GM12878 (cell line): ENCODE measurements at regions of chrX and their contacts with region 1.

Region 1: DNA sequence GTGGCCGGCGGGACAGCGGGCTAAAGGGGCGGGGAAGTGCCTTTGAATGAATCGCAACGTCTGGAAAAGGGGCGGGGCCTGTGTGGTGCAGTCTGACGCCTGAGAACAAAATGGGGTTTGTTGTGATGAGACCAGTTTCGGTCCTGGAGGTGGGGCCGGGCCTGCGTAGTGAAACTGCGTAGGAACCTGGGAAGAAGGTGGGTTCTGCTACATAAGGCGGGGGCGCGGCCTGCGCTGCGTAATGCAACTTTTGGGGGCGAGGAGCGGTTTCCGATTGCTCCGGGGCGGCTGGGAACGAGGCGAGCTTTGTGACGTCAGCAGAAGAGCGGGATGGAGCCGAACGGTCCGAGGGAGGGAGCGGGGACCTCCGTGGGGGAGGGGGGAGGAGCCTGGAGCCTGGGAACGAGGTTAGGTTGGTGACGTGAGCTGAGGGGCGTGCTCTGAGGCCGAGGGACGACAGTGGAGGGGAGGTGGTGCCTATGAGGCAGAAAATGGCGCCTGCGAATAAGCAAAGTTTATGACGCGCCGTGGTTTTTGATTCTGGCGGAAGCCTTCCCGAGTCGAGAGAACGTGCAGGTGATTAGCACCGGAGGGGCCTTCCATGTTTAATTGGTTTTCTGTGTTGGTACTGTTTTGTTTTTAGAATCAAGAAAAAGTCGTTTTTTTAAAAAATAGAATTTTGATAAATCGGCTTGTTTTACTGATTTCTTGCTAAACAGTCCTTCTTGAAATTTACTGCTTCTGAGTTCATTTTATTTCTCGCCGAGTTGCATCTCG is 716 bp downstream of the USP11 start:
- DNase-seq: peak; percentile 87
- ATAC-seq: peak; percentile 88
- H3K4me3 ChIP-seq: peak overlapping the region; percentile 68; the same call in 1 of the 2 replicates
- H3K27ac ChIP-seq: peak overlapping the region; percentile 79
- H3K4me1 ChIP-seq: no peaks in the 10 kb centered on the region
- H3K27me3 ChIP-seq: no peaks in the 10 kb centered on the region
- CTCF ChIP-seq: no peak
- EP300 ChIP-seq: peak in 1 of 2 experiments; percentile 47; a peak in 1 of 4 replicates
- POLR2A ChIP-seq: 0 out of 2 replicates have a peak, but pooled peaks have one; percentile 6
- RAD21 ChIP-seq: no peak

Region 2: DNA sequence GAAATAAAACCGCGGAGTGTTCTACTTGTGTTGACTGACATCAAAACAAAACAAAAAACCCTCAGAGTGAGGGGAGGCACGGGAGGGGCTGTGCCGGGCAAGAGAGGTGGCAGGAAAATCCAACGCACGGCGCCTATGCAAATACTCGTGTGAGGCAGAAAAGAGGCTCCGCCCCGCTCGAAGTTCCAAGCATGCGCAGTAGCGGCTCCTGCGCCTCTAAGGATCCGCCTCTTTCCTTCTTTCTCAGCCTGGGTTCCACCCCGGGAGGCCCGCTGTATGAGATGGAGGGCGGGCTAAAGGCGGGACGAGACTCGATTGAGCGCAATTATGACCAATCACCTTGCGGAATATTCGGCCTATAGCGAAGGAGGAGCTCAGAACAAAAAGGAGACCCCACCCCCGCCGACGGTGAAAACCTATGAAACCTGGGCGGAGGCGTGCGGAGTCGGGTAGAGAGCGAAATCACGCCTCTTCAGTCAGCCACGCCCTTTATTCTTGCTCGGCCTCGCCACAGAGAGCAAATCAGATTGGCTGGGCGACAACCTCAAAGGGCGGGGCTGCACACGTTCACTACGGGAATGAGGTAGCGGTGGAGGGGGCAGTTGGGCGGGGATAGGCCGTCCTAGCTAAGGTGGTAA is 15.8 kb before region 1 on chrX:
- CTCF ChIA-PET with region 1: interaction called, 4 read pairs
- POLR2A ChIA-PET with region 1: interaction called, 29 read pairs
- RAD21 ChIA-PET with region 1: interaction called, 9 read pairs
- SMC1A ChIA-PET with region 1: interaction called, 6 read pairs
- in situ Hi-C with region 1: no loop called
- intact Hi-C with region 1: no loop called
- DNase-seq: peak; percentile 99
- ATAC-seq: peak; percentile 90
- H3K4me3 ChIP-seq: peak overlapping the region; percentile 88; the same call in 1 of the 2 replicates
- H3K27ac ChIP-seq: peak overlapping the region; percentile 96
- H3K4me1 ChIP-seq: peaks cover 8% of the 10 kb centered on the region; the same call in 1 of the 2 replicates
- H3K27me3 ChIP-seq: no peaks in the 10 kb centered on the region
- CTCF ChIP-seq: no peak
- EP300 ChIP-seq: no peak
- POLR2A ChIP-seq: no peak; the same call in 1 of the 2 replicates
- RAD21 ChIP-seq: no peak

Region 3: DNA sequence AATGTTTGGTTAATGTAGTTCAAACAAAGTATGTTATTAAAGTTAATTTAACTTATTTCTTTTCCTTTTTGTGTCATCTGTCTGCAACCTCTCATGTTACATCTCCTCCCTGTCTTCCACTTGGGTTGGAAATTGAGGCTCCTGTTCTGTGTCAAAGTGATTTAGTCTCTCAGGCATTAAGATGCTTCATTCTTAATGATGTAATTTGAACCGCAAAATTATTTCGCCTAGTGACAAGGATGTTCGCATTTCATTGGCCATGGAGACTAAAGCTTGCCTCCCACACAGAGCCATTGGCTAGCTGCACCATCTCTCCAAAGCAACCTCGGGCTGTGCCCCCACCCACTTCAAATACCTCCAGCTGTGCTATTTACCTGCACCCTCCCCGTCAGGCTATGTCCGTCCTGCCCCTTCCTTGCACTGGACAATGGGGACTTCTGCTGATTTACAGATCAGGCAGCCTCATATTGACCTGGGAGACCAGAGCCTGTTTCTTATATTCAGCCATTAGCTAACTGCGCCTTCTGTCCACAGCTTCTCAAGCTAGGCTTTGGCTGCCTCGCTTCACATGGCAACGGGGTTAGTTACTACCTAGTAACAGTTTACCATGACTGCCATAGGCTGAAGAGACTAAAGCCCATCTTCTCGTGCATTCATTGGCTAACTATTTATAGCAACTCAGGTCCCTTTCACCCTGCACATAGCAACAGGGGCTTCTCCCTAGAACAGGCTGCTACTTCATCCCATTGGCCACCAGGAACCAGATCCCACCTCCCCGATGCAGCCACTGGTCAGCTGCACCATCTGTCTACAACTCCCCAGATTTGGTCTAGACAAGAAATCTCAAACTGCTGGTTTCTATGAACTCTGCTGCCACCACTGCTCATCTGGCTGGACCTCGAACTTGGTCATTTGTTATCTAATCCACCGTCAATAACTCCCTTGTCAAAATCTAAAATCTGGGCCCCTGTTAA is 128.3 kb after region 1 on chrX:
- CTCF ChIA-PET with region 1: interaction called, 5 read pairs
- POLR2A ChIA-PET with region 1: interaction called, 6 read pairs
- RAD21 ChIA-PET with region 1: interaction called, 4 read pairs
- SMC1A ChIA-PET with region 1: no interaction called
- in situ Hi-C with region 1: no loop called
- intact Hi-C with region 1: loop called (anchors 5 kb)
- DNase-seq: peak; percentile 96
- ATAC-seq: peak; percentile 89
- H3K4me3 ChIP-seq: peak overlapping the region; percentile 69
- H3K27ac ChIP-seq: peak overlapping the region; percentile 45
- H3K4me1 ChIP-seq: no peaks in the 10 kb centered on the region
- H3K27me3 ChIP-seq: no peaks in the 10 kb centered on the region
- CTCF ChIP-seq: peak; percentile 9 to 43 (median 29); a peak in 3 of 6 replicates
- EP300 ChIP-seq: no peak
- POLR2A ChIP-seq: no peak
- RAD21 ChIP-seq: peak; percentile 42; the same call in 1 of the 2 replicates

Region 4: DNA sequence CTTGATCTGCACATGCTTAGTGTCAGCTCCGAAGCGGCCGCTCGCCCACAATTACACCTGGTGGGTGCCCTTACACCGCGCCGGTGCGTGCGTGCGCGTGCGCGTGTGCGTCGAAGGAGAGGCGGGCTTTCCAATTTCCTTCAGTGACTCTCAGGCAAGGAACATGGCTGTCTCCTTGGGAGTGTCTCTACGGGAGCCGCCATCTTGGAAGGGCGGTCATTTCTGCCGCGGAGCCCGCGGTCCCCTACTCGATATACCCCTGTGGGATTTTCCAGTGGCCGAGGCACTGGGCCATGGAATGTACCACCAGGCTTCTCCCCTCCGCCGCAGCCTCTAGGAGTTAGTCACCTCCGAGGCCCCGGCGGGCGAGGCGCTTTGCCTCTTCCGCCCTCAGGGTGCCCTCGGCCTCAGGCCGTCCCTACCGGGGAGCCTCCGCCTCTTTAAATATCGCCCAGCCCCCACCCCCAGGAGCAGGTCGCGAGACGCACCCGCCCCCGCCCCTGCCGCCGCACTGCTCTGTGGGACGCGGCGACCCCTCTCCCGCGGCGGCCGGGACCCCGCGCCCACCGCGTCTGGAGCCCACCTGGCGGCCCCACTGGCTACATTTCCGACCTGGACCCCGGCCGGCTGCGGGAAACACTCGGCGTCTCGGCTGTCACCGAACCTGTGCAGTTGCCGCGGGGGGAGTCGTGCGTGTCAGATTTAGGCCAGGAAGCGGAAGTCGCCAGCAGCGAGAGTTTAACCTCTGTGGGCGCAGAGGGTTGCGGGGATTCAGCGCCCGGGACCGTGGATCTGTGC is 249.2 kb after region 1 on chrX and contains the start of gene ZNF41:
- CTCF ChIA-PET with region 1: no interaction called
- POLR2A ChIA-PET with region 1: no interaction called
- RAD21 ChIA-PET with region 1: no interaction called
- SMC1A ChIA-PET with region 1: no interaction called
- in situ Hi-C with region 1: no loop called
- intact Hi-C with region 1: loop called (anchors 2 kb)
- DNase-seq: peak; percentile 64
- ATAC-seq: peak; percentile 94
- H3K4me3 ChIP-seq: peak within 1 kb of the TSS; percentile 66
- H3K27ac ChIP-seq: peak within 1 kb of the TSS; percentile 88
- H3K4me1 ChIP-seq: no peaks in the 10 kb centered on the region; the same call in 1 of the 2 replicates
- H3K27me3 ChIP-seq: no peaks in the 10 kb centered on the region
- CTCF ChIP-seq: no peak
- EP300 ChIP-seq: no peak
- POLR2A ChIP-seq: peak; percentile 74
- RAD21 ChIP-seq: no peak
- polyA plus RNA-seq, gene ZNF41: 0.95 to 1.2 TPM